A673 (cell line): ENCODE measurements at regions of chr2 and their contacts with region 1.

Region 1: GRCh38 chr2:64311948-64312621 is 141.9 kb upstream of the LGALSL start:
- DNase-seq: peak; percentile 96
- H3K4me3 ChIP-seq: peak overlapping the region; percentile 9
- H3K27ac ChIP-seq: peak overlapping the region; percentile 81
- H3K4me1 ChIP-seq: peaks cover 30% of the 10 kb centered on the region
- H3K27me3 ChIP-seq: no peaks in the 10 kb centered on the region
- CTCF ChIP-seq: peak; percentile 72

Region 2: DNA sequence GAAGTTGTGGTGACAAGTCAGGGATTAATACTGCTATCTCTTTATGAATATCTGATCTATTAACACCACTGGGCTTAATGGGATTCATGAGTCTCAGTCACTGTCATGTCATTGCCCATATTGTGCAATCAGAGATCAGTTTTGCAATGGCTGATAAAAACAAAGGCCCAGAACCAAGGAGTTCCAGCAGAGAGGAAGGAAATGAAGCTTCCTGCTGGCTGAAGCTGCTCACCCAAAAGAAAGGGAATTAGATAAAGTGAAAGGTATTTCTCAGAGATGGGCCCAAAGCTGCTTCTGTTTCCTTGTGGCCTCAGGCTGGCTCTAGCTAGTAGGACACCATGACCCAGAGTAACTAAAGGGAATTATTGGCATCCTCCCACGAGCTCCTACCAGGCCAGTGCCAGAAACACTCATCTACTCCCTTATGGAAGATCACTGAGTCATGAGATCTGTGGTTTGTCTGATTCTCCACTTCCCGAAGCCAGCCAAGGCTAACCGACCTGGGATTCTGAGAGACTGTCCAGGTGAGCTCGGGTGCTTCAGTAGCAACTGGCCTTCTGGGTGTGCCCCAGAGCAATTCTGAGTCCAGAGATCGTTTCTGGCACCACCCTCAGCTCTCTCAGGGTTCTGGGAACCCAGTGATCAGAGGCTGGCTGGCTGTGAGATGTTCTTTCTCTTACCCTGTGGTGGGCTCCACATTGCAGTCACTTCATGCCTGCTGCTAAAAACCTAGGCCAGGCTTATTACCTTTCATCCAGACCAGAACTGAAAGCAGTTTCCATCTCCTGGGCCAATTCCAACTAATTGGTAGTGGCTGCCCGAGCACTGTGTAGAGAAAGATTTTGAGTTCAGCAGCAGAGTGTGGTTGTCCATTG is 38.3 kb before region 1 on chr2:
- CTCF ChIA-PET with region 1: no interaction called
- POLR2A ChIA-PET with region 1: interaction called, 5 read pairs
- intact Hi-C with region 1: loop called (anchors 2 kb)
- DNase-seq: peak; percentile 97
- H3K4me3 ChIP-seq: peak overlapping the region; percentile 8
- H3K27ac ChIP-seq: peak overlapping the region; percentile 89
- H3K4me1 ChIP-seq: peaks cover 45% of the 10 kb centered on the region
- H3K27me3 ChIP-seq: no peaks in the 10 kb centered on the region
- CTCF ChIP-seq: no peak

Region 3: GRCh38 chr2:64453770-64454385 is 141.8 kb after region 1 on chr2 and contains the start of gene LGALSL:
- CTCF ChIA-PET with region 1: no interaction called
- POLR2A ChIA-PET with region 1: no interaction called
- intact Hi-C with region 1: no loop called
- DNase-seq: no peak
- H3K4me3 ChIP-seq: peak within 1 kb of the TSS; percentile 76
- H3K27ac ChIP-seq: peak within 1 kb of the TSS; percentile 67
- H3K4me1 ChIP-seq: peaks cover 12% of the 10 kb centered on the region
- H3K27me3 ChIP-seq: no peaks in the 10 kb centered on the region
- CTCF ChIP-seq: no peak
- total RNA-seq, gene LGALSL: 5.9 and 7.4 TPM in 2 replicates